Activated CD8-positive, alpha-beta memory T cell treated with anti-CD3 and anti-CD28 coated beads, Interleukin-2, amount 10 ng/mL, durations not matched to agents 7 days and 5 days (primary cell): ENCODE measurements at regions of chr15 and their contacts with region 1.

Region 1: GRCh38 chr15:60397772-60398445 is at the start of gene ANXA2:
- DNase-seq: peak; percentile 92
- ATAC-seq: peak; percentile 83
- H3K4me3 Mint-ChIP-seq: peak within 1 kb of the TSS; percentile 95
- H3K27ac Mint-ChIP-seq: peak within 1 kb of the TSS; percentile 95
- H3K4me1 Mint-ChIP-seq: peaks cover 52% of the 10 kb centered on the region
- H3K27me3 Mint-ChIP-seq: peaks cover 9% of the 10 kb centered on the region
- total RNA-seq, gene ANXA2: 382 to 422 TPM

Region 2: DNA sequence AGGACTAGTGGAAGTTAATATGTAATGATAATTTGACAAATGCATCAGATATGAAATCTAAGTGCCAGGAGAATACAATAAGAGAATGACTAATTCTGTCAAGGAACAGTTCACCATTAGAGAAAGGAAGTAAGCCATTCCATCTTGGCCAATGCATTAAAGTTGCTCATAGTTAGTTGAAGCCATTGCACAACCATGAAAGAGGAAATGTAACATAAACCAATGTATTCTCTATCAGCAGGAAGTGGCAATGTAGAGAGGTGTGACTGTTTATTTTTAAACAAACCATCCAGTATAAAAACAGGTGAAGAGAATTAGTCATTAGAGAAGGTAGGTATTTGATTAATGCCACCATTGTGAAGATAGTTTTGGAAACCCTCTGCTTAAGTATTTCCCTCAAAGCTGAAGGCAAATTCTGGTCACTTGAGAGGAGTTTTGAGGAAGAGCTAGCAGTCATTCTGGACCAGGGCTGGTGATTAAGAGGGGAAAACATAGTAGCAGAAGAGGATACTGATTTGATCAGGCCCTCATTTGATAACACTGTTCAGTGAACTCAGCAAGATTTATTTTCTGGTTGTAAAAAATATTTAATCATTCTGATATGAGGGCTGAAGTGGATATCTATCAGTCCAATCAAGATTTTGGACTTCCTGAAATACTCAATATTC is 10.7 kb after region 1 on chr15:
- CTCF ChIA-PET with region 1: interaction called, 16 read pairs
- DNase-seq: no peak
- ATAC-seq: peak; percentile 89
- H3K4me3 Mint-ChIP-seq: no peak overlapping the region
- H3K27ac Mint-ChIP-seq: peak overlapping the region; percentile 84
- H3K4me1 Mint-ChIP-seq: peaks cover 21% of the 10 kb centered on the region
- H3K27me3 Mint-ChIP-seq: no peaks in the 10 kb centered on the region